B cell (primary cell): ENCODE measurements at regions of chr19 and their contacts with region 1.

Region 1: DNA sequence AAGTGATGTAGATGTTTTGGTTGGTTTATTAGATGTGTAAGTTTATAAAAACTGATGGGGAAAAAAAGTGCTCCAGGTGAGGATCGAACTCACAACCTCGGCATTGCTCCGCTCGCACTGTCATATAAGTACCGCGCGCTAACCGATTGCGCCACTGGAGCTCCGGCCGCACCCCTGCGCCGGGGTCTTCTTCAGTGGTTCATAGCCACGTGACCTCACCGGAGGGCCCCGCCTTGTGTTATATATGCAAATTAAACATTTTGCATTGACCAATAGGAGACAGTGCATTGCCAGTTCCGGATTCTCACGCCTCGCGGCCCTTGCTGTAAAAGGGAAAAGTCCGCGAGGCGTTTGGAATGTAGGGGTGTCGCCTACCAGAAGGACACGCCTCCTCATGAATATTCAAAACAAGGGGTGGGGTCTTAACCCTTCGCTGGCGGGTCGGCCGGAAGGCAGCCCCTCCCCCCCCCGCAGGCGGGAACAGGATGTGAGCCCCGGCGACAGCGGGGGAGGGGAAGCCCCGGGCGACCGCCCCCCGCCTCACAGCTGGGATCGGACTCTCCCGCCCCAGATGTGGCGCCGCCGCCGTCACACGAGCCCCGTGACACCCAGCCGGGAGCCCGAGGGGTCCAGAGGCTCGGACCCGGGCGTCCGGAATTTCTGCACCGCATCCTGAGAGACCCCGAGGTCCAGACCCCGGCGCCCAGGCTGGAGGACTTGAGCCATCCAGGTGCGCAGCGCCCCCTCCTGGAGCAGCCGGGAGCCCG is at the start of gene PLEKHG2:
- DNase-seq: peak; percentile 99
- ATAC-seq: peak; percentile 53
- H3K4me3 ChIP-seq: peak within 1 kb of the TSS; percentile 74 to 98 (median 92)
- H3K4me3 Mint-ChIP-seq: peak within 1 kb of the TSS; percentile 94
- H3K27ac ChIP-seq: peak within 1 kb of the TSS; percentile 100
- H3K27ac Mint-ChIP-seq: peak within 1 kb of the TSS; percentile 99
- H3K4me1 ChIP-seq: peaks cover 24 to 40% of the 10 kb centered on the region in 2 donors
- H3K4me1 Mint-ChIP-seq: peaks cover 49% of the 10 kb centered on the region
- H3K27me3 ChIP-seq: no peaks in the 10 kb centered on the region
- H3K27me3 Mint-ChIP-seq: no peaks in the 10 kb centered on the region
- CTCF ChIP-seq: no peak
- total RNA-seq, gene PLEKHG2: 154 and 167 TPM in 2 replicates

Region 2: DNA sequence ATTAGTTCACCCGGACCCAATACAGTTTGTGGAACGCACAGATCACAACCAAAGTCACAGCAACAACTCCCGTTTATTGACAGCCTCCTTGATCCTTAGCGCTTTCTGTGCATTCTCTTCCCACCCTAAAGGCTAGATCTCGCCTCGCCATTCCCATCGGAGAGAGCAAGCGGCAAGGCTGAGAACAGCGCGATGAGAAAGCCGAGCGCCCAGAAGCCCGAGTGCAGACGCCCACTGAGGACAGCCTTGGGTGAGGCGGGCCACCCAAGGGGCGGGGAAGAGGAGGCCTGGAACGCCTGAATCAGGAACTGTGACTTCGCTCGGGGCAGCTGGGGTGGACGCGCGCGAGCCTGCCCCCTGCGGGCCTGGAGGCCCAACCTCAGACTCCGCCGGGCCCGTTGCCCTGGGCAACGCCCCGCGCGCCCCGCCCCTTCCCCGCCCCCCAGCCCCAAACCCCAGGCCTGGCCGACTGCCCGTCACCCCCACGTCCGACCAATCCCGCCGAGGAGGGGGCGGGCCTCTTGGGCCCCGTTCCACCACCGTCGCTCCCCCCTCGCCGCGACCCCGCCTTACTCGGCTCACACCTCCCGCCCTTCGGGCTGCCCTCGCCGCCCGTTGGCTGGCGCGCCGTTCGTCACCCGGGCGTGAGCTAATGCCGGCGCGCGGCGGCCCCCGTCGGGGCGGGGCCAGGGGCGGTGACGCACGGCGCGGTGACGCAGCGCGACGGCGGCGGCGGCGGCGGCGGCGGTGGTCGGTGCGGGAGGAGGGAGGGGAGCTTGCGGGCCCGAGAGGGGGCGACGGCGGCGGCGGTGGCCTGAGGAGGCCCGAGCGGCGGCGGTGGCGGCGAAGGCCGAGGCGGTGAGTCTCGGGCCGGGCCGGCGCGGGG is 70.3 kb before region 1 on chr19 and contains the start of gene SAMD4B:
- CTCF ChIA-PET with region 1: interaction called, 8 read pairs
- POLR2A ChIA-PET with region 1: interaction called, 8 read pairs
- intact Hi-C with region 1: loop called (anchors 1 kb)
- DNase-seq: peak; percentile 99
- ATAC-seq: peak; percentile 92
- H3K4me3 ChIP-seq: peak within 1 kb of the TSS; percentile 88 to 98 (median 98)
- H3K4me3 Mint-ChIP-seq: peak within 1 kb of the TSS; percentile 97
- H3K27ac ChIP-seq: peak within 1 kb of the TSS; percentile 79 to 86
- H3K27ac Mint-ChIP-seq: peak within 1 kb of the TSS; percentile 95
- H3K4me1 ChIP-seq: peaks cover 32 to 46% of the 10 kb centered on the region in 2 donors
- H3K4me1 Mint-ChIP-seq: peaks cover 65% of the 10 kb centered on the region
- H3K27me3 ChIP-seq: no peaks in the 10 kb centered on the region
- H3K27me3 Mint-ChIP-seq: no peaks in the 10 kb centered on the region
- CTCF ChIP-seq: peak; percentile 81
- total RNA-seq, gene SAMD4B: 90.0 and 96.1 TPM in 2 replicates

Region 3: DNA sequence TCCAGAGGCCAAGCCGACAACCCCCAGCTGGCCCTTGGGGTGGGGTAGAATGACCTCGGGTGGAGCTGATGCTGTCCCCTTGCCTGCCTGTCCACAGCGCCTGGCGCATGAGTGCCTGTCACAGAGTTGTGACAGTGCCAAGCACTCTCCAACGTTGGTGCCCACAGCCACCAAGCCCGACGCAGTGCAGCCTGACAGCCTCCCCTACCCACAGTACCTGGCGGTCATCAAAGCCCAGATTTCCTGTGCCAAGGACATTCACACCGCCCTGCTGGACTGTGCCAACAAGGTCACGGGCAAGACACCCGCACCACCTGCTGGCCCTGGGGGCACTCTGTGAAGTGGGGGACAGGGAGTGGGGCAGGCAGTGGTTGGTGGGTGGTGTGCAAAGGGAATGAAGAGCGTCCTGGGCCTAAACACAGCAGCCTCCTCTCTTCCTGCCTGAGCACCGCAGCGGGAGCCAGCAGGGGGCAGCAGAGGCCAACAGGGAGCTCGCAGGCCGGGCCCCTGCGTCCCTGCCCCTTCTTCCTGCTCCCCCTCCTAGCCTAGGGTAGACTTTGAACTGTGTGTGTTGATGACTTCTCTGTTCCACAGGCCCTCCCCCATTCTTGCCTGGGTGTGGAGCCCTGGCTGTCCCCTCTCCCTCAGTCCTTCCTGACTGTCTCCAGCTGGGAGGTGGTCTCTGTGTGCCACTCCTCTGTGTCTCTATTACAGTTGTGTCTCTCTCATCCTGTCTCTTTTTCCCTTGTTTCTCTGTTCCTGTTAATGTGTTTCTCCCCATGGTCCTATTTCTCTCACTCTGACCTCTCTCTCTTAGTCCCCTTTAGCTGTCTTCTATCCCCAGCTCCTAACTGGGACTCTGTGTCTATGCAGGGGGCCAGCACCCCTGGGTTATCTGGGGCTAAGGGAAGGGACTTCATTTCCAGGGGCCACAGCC is 14.7 kb before region 1 on chr19:
- CTCF ChIA-PET with region 1: interaction called, 260 read pairs
- POLR2A ChIA-PET with region 1: interaction called, 74 read pairs
- intact Hi-C with region 1: loop called (anchors 1 kb)
- DNase-seq: peak; percentile 92
- ATAC-seq: peak; percentile 50
- H3K4me3 ChIP-seq: peak overlapping the region in 4 of 5 experiments; percentile 1 to 21 (median 13)
- H3K4me3 Mint-ChIP-seq: peak overlapping the region; percentile 70
- H3K27ac ChIP-seq: peak overlapping the region; percentile 90 to 100
- H3K27ac Mint-ChIP-seq: peak overlapping the region; percentile 96
- H3K4me1 ChIP-seq: peaks cover 49 to 57% of the 10 kb centered on the region in 2 donors
- H3K4me1 Mint-ChIP-seq: peaks cover 65% of the 10 kb centered on the region
- H3K27me3 ChIP-seq: no peaks in the 10 kb centered on the region
- H3K27me3 Mint-ChIP-seq: no peaks in the 10 kb centered on the region
- CTCF ChIP-seq: peak; percentile 94

Region 4: DNA sequence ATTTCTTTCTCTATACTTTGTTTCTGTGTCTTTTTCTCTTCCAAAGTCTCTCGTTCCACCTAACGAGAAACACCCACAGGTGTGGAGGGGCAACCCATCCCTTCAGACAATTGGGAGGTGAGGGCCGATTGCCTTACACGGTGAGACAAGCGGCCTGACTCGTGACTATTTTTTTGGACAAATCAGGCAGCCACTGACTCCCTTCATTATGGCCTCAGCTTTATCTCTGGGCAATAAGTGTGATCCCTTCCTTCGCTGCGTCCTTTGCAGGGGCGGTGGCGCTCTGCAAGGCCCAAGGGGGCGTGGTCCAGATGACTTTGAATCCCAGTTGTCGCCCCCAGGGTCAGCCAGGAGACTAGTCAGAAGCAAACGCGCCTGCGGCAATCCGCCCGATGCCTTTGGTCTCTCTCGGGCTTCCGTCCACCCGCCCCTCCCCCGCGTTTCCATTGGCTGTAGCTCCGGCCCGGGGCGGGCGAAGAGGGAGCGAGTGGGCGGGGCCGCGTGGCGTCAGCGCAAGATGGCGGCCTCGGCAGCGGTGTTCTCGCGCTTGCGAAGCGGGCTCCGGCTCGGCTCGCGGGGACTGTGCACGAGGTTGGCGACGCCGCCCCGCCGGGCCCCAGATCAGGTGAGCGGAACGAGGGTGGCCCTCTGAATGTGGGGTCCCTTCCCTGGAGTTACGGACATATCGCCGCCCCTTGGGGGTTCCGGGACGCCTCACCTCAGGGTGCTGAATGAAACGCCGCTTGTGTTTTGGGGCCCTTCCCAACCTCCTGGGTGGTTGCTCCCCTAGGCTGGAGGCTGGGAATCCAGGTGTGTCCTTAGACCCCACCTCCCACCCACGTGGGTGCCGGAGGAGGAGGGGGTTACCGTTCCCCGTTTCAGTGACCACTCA is 68.3 kb after region 1 on chr19 and contains the start of gene TIMM50:
- CTCF ChIA-PET with region 1: no interaction called
- POLR2A ChIA-PET with region 1: no interaction called
- intact Hi-C with region 1: loop called (anchors 1 kb)
- DNase-seq: peak; percentile 95
- ATAC-seq: peak; percentile 99
- H3K4me3 ChIP-seq: peak within 1 kb of the TSS; percentile 65 to 95 (median 89)
- H3K4me3 Mint-ChIP-seq: peak within 1 kb of the TSS; percentile 96
- H3K27ac ChIP-seq: peak within 1 kb of the TSS; percentile 67 to 84
- H3K27ac Mint-ChIP-seq: peak within 1 kb of the TSS; percentile 94
- H3K4me1 ChIP-seq: peaks cover 14 to 21% of the 10 kb centered on the region in 2 donors
- H3K4me1 Mint-ChIP-seq: peaks cover 25% of the 10 kb centered on the region
- H3K27me3 ChIP-seq: no peaks in the 10 kb centered on the region
- H3K27me3 Mint-ChIP-seq: no peaks in the 10 kb centered on the region
- CTCF ChIP-seq: no peak
- total RNA-seq, gene TIMM50: 52.3 and 55.3 TPM in 2 replicates

Region 5: GRCh38 chr19:39746836-39747529 is 334.7 kb after region 1 on chr19:
- CTCF ChIA-PET with region 1: no interaction called
- POLR2A ChIA-PET with region 1: no interaction called
- intact Hi-C with region 1: no loop called
- DNase-seq: no peak
- ATAC-seq: no peak
- H3K4me3 ChIP-seq: no peak overlapping the region
- H3K4me3 Mint-ChIP-seq: no peak overlapping the region
- H3K27ac ChIP-seq: no peak overlapping the region
- H3K27ac Mint-ChIP-seq: no peak overlapping the region
- H3K4me1 ChIP-seq: no peaks in the 10 kb centered on the region
- H3K4me1 Mint-ChIP-seq: no peaks in the 10 kb centered on the region
- H3K27me3 ChIP-seq: peaks cover 0 to 31% (median 17%) of the 10 kb centered on the region in 4 experiments
- H3K27me3 Mint-ChIP-seq: peaks cover 64% of the 10 kb centered on the region
- CTCF ChIP-seq: no peak